ENCODE measurements at regions of chr4 and their contacts with region 1.

Region 1: GRCh38 chr4:147096667-147097604 is 151.3 kb upstream of the TTC29 start:
- DNase-seq: peak; percentile 64
- ATAC-seq: peak; percentile 56
- H3K4me3 ChIP-seq: no peak overlapping the region
- H3K27ac ChIP-seq: no peak overlapping the region
- H3K4me1 ChIP-seq: peaks cover 7% of the 10 kb centered on the region; the same call in 1 of the 2 replicates
- H3K27me3 ChIP-seq: no peaks in the 10 kb centered on the region
- CTCF ChIP-seq: peak; percentile 69

Region 2: DNA sequence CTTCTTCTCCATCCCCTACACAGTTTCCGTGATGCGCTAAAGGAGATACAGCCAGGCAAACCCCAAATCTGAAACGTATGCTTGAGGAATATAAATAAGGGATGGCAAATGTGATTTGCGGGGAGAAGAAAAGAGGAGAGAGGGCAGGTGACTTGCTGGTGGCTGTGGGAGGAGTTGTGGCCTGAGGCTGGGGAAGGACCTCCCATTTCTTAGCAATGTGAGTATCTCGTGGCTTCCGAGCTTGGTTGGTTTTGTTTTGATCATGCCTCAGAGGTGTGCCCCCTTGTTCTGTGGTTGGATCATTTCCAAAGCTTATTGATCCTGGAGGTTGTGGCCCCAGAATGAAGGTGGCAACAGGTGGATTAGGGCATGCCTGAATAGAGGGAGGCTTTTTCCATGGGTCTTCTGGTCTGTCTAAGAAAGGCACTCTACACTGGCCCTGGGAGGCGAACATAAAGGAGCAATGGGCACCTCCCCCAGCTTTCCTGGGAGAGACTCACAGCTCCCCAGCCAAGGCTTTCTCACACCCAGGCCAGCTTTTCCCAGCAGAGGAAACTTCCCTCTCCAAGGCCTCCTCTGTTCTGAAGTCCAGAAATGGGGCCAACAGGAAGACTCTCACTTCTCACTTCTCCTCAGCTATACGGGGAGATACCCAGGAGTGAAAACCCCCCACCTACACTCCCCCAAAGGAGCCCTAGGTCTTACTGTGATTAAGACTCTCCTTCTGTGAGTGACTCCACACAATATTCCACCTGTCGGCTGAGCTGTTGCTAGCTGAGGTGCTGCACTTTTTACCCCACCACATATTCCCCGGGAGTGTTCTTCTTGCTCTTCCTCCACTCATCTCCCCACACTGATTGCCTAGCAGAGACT is 1376.9 kb before region 1 on chr4:
- CTCF ChIA-PET with region 1: no interaction called
- POLR2A ChIA-PET with region 1: no interaction called
- intact Hi-C with region 1: loop called (anchors 10 kb)
- DNase-seq: no peak
- ATAC-seq: no peak
- H3K4me3 ChIP-seq: no peak overlapping the region
- H3K27ac ChIP-seq: no peak overlapping the region
- H3K4me1 ChIP-seq: peaks cover 8% of the 10 kb centered on the region; the same call in 1 of the 2 replicates
- H3K27me3 ChIP-seq: no peaks in the 10 kb centered on the region
- CTCF ChIP-seq: no peak

Region 3: DNA sequence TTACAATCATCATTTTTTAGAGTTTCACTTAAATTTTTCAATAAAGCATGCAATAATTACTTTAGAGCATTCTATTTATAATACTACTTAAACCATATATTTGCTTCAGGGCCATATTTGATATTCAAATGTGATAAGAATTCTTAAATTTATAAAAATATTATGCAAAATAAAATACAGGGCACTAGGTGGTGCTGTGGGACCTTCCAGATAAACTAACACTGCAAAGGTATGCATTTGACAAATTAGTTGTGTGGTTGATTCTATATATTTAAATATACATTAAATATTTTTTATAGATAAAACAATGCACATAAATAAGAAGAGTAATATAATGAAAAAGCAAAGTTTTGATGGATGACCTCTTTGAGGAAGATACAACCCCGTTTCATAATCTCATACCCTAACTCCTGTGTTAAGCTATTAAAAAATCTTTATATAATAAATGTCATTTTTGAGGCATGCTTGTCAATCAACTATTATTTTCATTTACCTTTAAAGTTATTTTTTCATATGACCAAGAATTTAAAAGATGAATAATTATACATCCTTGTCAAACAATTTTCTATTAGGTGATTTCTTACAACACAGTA is 754.2 kb before region 1 on chr4:
- CTCF ChIA-PET with region 1: no interaction called
- POLR2A ChIA-PET with region 1: no interaction called
- intact Hi-C with region 1: loop called (anchors 5 kb)
- DNase-seq: peak; percentile 78
- ATAC-seq: peak; percentile 27; the same call in 1 of the 2 replicates
- H3K4me3 ChIP-seq: no peak overlapping the region
- H3K27ac ChIP-seq: no peak overlapping the region
- H3K4me1 ChIP-seq: peaks cover 8% of the 10 kb centered on the region
- H3K27me3 ChIP-seq: no peaks in the 10 kb centered on the region
- CTCF ChIP-seq: peak; percentile 46

Region 4: GRCh38 chr4:146916479-146917076 is 180.4 kb before region 1 on chr4:
- CTCF ChIA-PET with region 1: no interaction called
- POLR2A ChIA-PET with region 1: no interaction called
- intact Hi-C with region 1: loop called (anchors 5 kb)
- DNase-seq: peak; percentile 67
- ATAC-seq: no peak
- H3K4me3 ChIP-seq: no peak overlapping the region
- H3K27ac ChIP-seq: no peak overlapping the region
- H3K4me1 ChIP-seq: no peaks in the 10 kb centered on the region
- H3K27me3 ChIP-seq: peaks cover 60% of the 10 kb centered on the region
- CTCF ChIP-seq: peak; percentile 91

Region 5: GRCh38 chr4:147019061-147019460 is 77.9 kb before region 1 on chr4:
- CTCF ChIA-PET with region 1: interaction called, 29 read pairs
- POLR2A ChIA-PET with region 1: no interaction called
- intact Hi-C with region 1: loop called (anchors 1 kb)
- DNase-seq: peak; percentile 72
- ATAC-seq: peak; percentile 85
- H3K4me3 ChIP-seq: no peak overlapping the region
- H3K27ac ChIP-seq: no peak overlapping the region
- H3K4me1 ChIP-seq: no peaks in the 10 kb centered on the region
- H3K27me3 ChIP-seq: peaks cover 12% of the 10 kb centered on the region
- CTCF ChIP-seq: peak; percentile 77

Region 6: DNA sequence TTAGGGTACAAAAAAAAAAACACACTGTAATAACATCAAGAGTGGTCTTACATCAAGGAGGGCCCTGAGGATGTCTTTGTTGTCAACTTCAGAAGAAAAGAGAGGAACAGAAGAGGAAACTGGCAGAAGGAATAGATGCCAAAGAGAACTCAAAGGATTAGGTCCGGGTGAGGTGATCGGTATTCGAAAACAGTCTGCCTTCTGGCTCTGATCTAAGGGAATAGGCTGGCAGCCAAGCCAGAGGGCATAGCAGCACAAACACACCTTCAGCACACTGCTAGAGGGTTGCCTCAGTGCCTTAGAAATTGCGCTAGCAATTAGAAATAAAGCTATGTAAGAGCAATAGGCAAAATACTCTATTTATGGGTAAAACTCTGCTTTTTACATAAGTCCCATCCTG is 59.9 kb before region 1 on chr4:
- CTCF ChIA-PET with region 1: interaction called, 12 read pairs
- POLR2A ChIA-PET with region 1: no interaction called
- intact Hi-C with region 1: no loop called
- DNase-seq: no peak
- ATAC-seq: no peak
- H3K4me3 ChIP-seq: no peak overlapping the region
- H3K27ac ChIP-seq: no peak overlapping the region
- H3K4me1 ChIP-seq: no peaks in the 10 kb centered on the region
- H3K27me3 ChIP-seq: peaks cover 82% of the 10 kb centered on the region; the same call in 1 of the 2 replicates
- CTCF ChIP-seq: no peak

Measured in PC-3 (cell line).